Posterior vena cava (tissue), 2 donors: ENCODE measurements at regions of chr1 and their contacts with region 1.

Region 1: GRCh38 chr1:24391882-24392603 is 21.5 kb downstream of the STPG1 start:
- DNase-seq: no peak

Region 2: DNA sequence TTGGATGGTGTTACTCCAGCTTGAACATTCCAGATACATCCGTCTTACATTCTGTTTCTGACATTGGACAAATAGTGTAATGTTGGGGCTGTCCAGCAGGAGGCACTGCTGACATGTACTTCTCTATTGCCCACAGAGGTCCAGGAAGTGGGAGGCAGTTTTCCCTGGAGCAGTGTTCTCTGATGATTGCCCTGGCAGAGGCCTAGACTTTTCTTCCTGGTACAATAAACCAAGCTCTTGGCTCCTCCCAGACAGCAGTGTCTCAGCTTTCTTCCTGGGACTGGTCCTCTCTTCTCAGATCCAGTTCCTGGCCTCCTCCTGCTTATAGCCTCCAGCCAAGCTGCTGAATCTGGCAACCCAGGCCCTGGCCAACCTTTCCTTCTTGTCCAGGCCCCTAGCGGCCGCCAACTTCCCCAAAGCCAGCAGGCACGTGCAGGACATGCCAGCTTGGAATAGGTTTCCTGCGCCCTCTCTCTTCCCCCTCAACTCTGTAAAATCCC is 190.1 kb before region 1 on chr1:
- intact Hi-C with region 1: loop called (anchors 2 to 5 kb)
- DNase-seq: peak; percentile 89